Breast epithelium (tissue), 4 donors: ENCODE measurements at regions of chr15 and their contacts with region 1.

Region 1: DNA sequence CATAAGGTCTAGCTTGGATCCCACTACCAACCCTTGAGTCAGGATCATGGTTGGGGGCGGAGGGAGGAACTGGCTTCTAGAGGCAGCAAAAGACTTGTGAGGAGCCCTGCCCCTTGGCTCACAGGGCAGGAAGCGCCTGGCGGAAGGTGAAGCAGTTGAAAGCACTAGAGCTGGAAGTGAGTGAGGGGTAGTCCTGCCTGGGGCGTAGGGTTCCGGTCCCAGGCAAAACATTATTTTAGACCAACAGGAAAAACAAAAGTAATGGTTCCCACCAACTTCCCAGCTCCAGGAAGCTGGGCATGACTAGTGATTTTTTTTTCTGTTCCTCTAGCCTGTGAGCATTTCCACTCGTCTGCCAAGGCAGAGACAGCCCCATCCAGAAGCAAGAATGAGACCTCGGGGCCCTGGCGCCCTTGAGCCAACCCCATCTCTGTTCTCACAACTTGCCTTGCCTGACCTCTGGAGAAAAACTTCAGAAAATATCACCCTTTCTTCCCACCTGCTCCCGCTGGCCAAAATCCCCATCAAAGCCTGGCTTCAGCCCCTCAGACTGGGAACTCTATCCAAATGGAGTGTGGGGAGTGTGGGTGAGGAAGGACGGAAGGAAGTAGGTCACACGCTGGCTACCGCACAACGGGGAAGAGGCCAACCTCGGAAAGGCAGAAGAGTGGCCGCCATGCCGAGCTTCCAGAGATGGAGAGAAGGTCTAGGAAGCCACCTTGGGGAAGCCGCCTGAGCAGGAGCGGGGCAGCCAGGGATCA is 57.5 kb downstream of the RBPMS2 start:
- DNase-seq: no peak
- H3K4me3 ChIP-seq: peak overlapping the region in 2 of 3 donors; percentile 34 to 58
- H3K27ac ChIP-seq: peak overlapping the region; percentile 45 to 90
- H3K4me1 ChIP-seq: no peaks in the 10 kb centered on the region
- H3K27me3 ChIP-seq: no peaks in the 10 kb centered on the region
- CTCF ChIP-seq: no peak
- POLR2A ChIP-seq: no peak

Region 2: GRCh38 chr15:64701482-64702184 is 16.3 kb before region 1 on chr15:
- intact Hi-C with region 1: loop called (anchors 1 kb)
- DNase-seq: no peak
- H3K4me3 ChIP-seq: peak overlapping the region; percentile 85 to 96 (median 87)
- H3K27ac ChIP-seq: peak overlapping the region; percentile 94 to 95
- H3K4me1 ChIP-seq: peaks cover 16 to 30% of the 10 kb centered on the region in 2 donors
- H3K27me3 ChIP-seq: no peaks in the 10 kb centered on the region
- CTCF ChIP-seq: no peak
- POLR2A ChIP-seq: no peak